GM13977 (cell line): ENCODE measurements at regions of chr4 and their contacts with region 1.

Region 1: DNA sequence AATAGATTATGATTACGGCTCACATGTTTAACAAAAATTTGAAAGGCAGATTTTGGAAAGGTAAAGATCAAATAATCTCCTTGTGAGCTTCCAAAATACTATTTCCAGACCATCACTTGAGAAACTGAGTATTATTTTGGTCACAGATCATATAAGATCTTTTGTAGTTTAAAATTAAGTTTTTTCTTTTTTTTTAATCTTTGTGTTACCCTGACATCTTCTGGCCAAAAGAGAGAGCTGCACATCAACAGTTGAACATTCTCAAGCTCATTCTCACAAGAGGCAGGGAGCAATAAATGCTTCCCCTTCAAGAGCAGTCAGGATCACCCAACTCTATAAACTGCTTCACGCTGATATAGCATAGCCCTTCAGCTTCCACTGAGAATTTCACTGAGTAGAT is 15.9 kb downstream of the TMEM192 start:
- DNase-seq: peak; percentile 41
- CTCF ChIP-seq: peak; percentile 63

Region 2: GRCh38 chr4:164716901-164717300 is 379.9 kb before region 1 on chr4:
- in situ Hi-C with region 1: no loop called
- DNase-seq: no peak
- CTCF ChIP-seq: peak; percentile 22

Region 3: DNA sequence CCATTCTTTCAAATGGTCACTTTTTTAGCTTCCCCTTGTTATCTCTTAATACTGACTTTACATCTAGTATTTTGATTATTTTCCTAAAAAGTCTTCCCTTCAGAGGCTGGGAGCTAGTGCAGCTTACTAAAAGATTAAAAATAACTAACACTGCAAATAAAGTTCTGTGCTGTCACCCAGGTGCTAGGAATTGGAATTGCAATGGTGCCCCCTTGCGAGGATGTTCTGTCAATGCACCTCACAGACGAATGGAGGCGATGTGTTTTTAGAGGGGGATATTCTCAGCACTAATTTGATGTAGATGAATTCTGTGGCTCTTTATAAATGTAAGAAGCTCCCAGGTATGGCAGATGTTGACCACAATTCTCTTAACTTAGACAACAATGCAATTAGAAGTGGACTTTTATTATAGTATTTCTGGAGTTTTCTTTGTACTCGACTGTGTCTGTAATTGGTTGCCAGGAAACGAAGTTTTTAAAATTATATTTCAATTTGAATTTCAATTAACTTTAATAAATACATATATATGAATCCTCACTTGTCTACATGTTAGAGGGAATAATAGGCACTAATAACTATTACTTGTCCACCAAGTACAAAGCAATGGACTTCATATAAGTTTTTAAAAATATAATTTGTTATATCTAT is 364.8 kb before region 1 on chr4:
- in situ Hi-C with region 1: no loop called
- DNase-seq: peak; percentile 51
- CTCF ChIP-seq: peak; percentile 86

Region 4: GRCh38 chr4:164779811-164780216 is 317.0 kb before region 1 on chr4:
- in situ Hi-C with region 1: loop called (anchors 10 kb)
- DNase-seq: peak; percentile 58
- CTCF ChIP-seq: peak; percentile 92